AG04450 (cell line): ENCODE measurements at regions of chr17 and their contacts with region 1.

Region 1: DNA sequence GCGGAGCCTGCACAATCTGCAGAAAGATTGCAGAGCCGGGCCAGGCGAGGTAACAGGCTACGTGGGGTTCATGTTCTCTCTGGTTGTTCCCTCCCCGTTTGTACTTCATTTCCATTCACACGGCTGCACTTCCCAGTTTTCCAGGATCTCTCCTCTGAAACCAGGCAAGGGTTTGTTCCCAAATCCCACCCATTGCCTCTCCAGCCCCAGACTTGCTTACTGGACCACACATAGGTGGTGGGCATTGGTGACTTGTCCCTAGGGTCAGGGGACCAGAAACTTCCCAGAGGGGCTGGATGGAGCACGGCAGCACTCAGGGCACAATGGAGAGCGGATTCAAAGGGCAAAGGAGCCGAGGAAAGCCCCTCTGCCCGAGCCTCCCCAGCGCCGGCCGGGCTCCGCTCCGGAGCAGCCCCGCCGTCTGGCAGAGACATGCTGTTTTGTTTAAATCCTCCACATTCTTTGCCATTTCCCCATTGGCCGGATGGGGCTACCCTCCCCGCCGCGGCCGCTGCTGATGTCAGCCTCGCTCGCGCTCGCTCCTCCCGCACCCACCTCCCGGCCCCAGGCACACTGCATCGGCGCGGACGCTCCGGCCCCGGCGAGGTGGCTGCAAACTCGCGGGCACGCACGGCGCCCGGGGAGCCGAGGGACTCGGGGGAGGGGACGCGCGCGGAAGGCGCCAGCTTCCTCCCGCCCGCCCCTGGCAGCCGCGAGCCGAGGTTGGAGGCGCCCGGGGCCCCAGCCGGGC is at the start of gene PITPNC1:
- DNase-seq: peak; percentile 61
- H3K4me3 ChIP-seq: peak within 1 kb of the TSS; percentile 79
- H3K27ac ChIP-seq: peak within 1 kb of the TSS; percentile 83
- H3K27me3 ChIP-seq: no peaks in the 10 kb centered on the region
- CTCF ChIP-seq: no peak
- polyA plus RNA-seq, gene PITPNC1: 7.5 and 9.1 TPM in 2 replicates

Region 2: GRCh38 chr17:67194134-67194533 is 182.8 kb before region 1 on chr17:
- CTCF ChIA-PET with region 1: no interaction called
- POLR2A ChIA-PET with region 1: no interaction called
- DNase-seq: peak; percentile 37
- H3K4me3 ChIP-seq: no peak overlapping the region
- H3K27ac ChIP-seq: no peak overlapping the region
- H3K27me3 ChIP-seq: no peaks in the 10 kb centered on the region
- CTCF ChIP-seq: no peak

Region 3: DNA sequence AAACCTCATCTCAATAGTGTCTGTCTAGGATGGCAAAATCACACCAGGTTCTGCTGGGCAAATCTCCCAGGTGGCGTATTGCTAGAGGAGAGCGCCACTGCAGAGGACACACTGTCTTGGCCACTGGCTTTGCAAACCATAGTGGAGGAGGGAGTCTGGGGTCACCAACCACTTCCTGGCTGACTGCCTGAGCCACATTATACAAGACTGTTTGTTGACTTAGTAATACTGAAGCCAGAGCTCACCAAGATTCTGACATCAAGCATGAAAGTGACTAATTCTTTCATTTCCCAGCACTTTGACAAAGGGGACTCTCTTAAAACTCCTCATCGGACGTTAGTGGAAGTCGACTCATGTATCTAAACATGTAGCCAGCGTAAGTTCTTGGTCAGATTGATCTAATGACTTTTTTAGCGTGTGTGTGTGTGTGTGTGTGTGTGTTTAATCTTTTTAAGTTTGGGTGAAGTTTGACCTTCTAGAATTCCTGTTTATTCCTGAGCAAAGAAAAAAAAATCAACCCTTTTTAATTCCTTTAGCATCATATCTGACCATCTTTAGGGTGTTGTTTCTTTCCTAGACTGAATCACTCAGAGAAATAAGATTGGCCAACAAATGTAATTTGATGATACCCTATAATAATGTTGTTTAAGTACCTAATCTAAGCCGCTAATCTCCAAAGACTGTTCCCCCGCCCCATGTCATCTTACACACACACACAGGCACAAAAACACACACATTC is 13.9 kb after region 1 on chr17:
- CTCF ChIA-PET with region 1: interaction called, 11 read pairs
- POLR2A ChIA-PET with region 1: interaction called, 6 read pairs
- DNase-seq: peak; percentile 65
- H3K4me3 ChIP-seq: peak overlapping the region; percentile 31
- H3K27ac ChIP-seq: peak overlapping the region; percentile 61
- H3K27me3 ChIP-seq: peaks cover 3% of the 10 kb centered on the region
- CTCF ChIP-seq: no peak

Region 4: GRCh38 chr17:67438667-67439066 is 61.8 kb after region 1 on chr17:
- CTCF ChIA-PET with region 1: interaction called, 10 read pairs
- POLR2A ChIA-PET with region 1: no interaction called
- DNase-seq: no peak
- H3K4me3 ChIP-seq: no peak overlapping the region
- H3K27ac ChIP-seq: no peak overlapping the region
- H3K27me3 ChIP-seq: no peaks in the 10 kb centered on the region
- CTCF ChIP-seq: no peak

Region 5: GRCh38 chr17:67629971-67630320 is 253.0 kb after region 1 on chr17:
- CTCF ChIA-PET with region 1: interaction called, 126 read pairs
- POLR2A ChIA-PET with region 1: no interaction called
- DNase-seq: no peak
- H3K4me3 ChIP-seq: no peak overlapping the region
- H3K27ac ChIP-seq: no peak overlapping the region
- H3K27me3 ChIP-seq: no peaks in the 10 kb centered on the region
- CTCF ChIP-seq: peak; percentile 70

Region 6: DNA sequence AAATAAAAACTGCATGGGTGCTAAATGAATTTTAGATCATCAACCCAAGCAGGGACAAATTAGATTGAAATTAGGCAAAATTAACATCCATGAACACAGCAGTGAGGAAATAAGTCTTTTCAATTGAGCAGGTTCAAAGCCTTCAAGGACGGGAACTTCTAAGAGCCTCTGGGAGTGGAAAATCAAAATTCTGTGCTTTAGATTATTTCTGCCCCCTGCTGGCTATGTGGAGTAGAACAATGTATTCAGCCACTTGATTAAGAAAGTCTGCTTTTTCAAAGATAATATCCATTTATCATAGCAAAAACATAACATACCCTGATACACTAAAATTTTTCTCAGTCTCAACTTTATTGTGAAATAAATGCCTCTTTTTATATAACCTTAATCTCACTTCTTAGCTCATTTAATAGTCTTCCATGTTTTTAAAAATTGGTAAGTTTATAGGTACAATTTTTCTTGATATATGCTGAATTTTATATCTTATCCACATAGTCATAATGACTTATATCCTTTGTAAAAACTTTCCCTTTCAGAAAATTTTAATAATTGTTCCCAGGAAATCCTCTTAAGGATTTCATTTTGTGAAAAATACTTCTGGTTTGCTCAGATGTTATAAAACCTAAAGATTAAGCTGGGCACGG is 312.7 kb after region 1 on chr17:
- CTCF ChIA-PET with region 1: interaction called, 61 read pairs
- POLR2A ChIA-PET with region 1: no interaction called
- DNase-seq: peak; percentile 21
- H3K4me3 ChIP-seq: no peak overlapping the region
- H3K27ac ChIP-seq: no peak overlapping the region
- H3K27me3 ChIP-seq: no peaks in the 10 kb centered on the region
- CTCF ChIP-seq: peak; percentile 73